ENCODE measurements at regions of chrX and their contacts with region 1.

Region 1: DNA sequence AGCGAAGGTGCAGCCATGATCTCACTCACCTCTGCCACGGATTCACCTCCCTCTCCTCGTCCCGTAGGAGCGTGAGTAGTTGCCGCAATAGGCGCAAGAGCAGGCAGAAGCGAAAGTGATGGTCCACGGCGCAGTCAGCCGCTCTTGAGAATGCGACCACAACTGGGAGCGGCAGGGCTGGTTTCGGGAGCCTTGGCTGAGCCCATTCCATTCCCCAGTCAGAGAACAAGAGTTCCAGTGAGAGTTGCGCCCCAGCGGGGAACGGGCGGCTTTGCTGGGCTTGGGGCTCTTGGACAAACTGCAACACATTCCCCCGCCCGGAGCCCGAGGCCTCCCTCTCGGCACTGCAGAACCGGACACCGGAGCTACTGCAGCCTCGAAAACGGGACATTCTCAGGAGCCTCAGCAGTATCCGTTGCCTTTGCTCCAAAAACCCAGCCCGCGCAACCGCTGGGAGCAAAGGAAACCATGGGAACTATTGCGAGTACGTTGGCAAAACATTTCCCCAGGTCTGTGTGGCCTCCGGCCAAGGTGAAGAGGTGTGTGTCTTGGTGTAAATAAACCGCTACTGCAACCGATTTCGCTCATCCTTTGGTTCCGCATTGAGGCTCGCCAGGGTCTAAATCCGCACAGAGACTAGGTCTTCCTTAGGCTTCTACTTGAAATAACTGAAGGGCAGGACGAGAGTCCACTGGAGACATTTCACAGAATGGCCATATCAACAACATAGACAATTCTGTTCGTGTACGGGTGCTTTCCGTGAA is 5.7 kb upstream of the ZBTB33 start:
- ATAC-seq: peak; percentile 89 to 95 (median 91)
- H3K4me3 ChIP-seq: peak overlapping the region; percentile 50 to 87 (median 58)
- H3K27ac ChIP-seq: peak overlapping the region; percentile 59 to 60
- H3K4me1 ChIP-seq: peaks cover 0 to 6% of the 10 kb centered on the region in 2 donors

Region 2: GRCh38 chrX:120120223-120120622 is 124.7 kb before region 1 on chrX:
- in situ Hi-C with region 1: loop called in 1 of 9 experiments (anchors 25 kb)
- ATAC-seq: no peak
- H3K4me3 ChIP-seq: no peak overlapping the region
- H3K27ac ChIP-seq: no peak overlapping the region
- H3K4me1 ChIP-seq: no peaks in the 10 kb centered on the region

Region 3: GRCh38 chrX:121114691-121115090 is 869.8 kb after region 1 on chrX:
- in situ Hi-C with region 1: no loop called
- ATAC-seq: peak in 2 of 8 experiments; percentile 23 to 39
- H3K4me3 ChIP-seq: no peak overlapping the region
- H3K27ac ChIP-seq: no peak overlapping the region
- H3K4me1 ChIP-seq: no peaks in the 10 kb centered on the region

Measured in motor neuron (in vitro differentiated cells).